Natural killer cell (primary cell): ENCODE measurements at regions of chr14 and their contacts with region 1.

Region 1: DNA sequence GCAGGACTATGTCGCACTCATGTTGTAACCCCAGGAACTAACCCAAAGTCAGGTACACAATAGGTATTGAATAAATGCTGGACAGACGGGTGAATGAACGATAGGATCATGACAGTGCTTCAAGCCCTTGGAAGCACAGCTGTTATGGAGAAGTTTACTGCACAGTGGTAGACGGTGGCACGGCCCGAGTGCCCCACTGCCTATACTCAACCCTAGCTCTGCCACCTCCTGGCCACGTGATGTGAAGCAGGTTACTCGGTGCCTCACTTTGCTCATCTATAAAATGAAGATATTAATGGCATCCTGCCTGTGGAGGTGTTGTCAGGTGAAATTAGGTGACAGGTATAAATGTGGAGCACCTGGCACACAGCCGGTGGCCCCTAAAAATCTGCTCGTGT is 5.8 kb downstream of the ASB2 start:
- DNase-seq: peak; percentile 64 to 86
- ATAC-seq: peak; percentile 90 to 94 (median 92)
- H3K4me3 ChIP-seq: peak overlapping the region; percentile 82
- H3K4me3 Mint-ChIP-seq: peak overlapping the region; percentile 92
- H3K27ac ChIP-seq: peak overlapping the region; percentile 49
- H3K27ac Mint-ChIP-seq: peak overlapping the region; percentile 76 to 92
- H3K4me1 ChIP-seq: peaks cover 57% of the 10 kb centered on the region
- H3K4me1 Mint-ChIP-seq: peaks cover 18 to 30% of the 10 kb centered on the region in 2 donors
- H3K27me3 ChIP-seq: peaks cover 3% of the 10 kb centered on the region
- H3K27me3 Mint-ChIP-seq: peaks cover 6 to 8% of the 10 kb centered on the region in 2 donors
- CTCF ChIP-seq: peak; percentile 73

Region 2: GRCh38 chr14:93939304-93940229 is 31.0 kb before region 1 on chr14:
- intact Hi-C with region 1: loop called (anchors 1 kb)
- DNase-seq: peak; percentile 92 to 97
- ATAC-seq: peak; percentile 97 to 99 (median 97)
- H3K4me3 ChIP-seq: peak overlapping the region; percentile 8
- H3K4me3 Mint-ChIP-seq: no peak overlapping the region
- H3K27ac ChIP-seq: no peak overlapping the region
- H3K27ac Mint-ChIP-seq: peak overlapping the region in 1 of 2 donors; percentile 42
- H3K4me1 ChIP-seq: peaks cover 13% of the 10 kb centered on the region
- H3K4me1 Mint-ChIP-seq: peaks cover 0 to 5% of the 10 kb centered on the region in 2 donors
- H3K27me3 ChIP-seq: no peaks in the 10 kb centered on the region
- H3K27me3 Mint-ChIP-seq: no peaks in the 10 kb centered on the region
- CTCF ChIP-seq: peak; percentile 99

Region 3: DNA sequence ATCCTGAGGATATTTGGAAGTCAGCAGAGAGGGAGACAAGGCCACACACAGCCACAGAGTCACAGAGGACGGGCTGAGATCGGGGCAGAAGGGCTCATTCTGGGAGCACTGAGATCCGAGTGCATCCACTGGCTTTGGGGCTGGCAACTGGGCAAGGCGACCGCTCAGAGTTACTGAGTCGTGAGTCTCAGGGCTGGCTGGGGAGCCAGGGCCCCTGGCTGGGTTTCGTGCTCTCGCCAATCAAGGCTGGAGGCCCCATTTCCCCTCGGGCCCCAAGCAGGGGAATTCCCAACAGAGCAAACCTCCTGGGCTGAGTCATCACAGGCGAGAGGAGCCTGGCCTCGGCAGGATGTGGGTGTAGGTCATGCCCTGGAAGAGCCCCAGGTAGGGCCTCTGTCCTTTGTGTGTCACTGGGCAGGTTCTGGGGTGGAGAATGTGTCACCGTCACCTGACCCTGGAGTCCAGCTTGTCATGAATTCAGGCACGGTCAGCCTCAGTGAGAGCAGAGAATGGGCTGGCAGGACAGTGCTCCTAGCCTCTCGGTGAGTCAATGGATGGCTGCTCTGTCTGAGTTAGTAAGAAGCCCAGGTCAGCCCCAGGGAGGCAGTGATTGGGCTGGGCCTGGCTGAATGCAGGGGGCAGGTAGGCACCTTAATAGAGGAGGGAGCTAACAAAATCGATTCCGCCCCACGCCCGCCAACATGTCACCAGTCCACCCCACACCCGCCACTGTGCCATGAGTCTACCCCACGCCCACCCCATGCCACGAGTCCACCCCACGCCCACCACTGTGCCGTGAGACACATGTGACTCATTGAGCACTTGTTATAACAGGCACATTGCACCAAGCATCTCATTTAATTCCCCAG is 11.1 kb before region 1 on chr14:
- intact Hi-C with region 1: loop called (anchors 2 kb)
- DNase-seq: peak; percentile 86 to 96
- ATAC-seq: peak; percentile 64 to 86 (median 80)
- H3K4me3 ChIP-seq: no peak overlapping the region
- H3K4me3 Mint-ChIP-seq: peak overlapping the region; percentile 81
- H3K27ac ChIP-seq: peak overlapping the region; percentile 81
- H3K27ac Mint-ChIP-seq: peak overlapping the region; percentile 95 to 97
- H3K4me1 ChIP-seq: peaks cover 98% of the 10 kb centered on the region
- H3K4me1 Mint-ChIP-seq: peaks cover 90 to 98% of the 10 kb centered on the region in 2 donors
- H3K27me3 ChIP-seq: no peaks in the 10 kb centered on the region
- H3K27me3 Mint-ChIP-seq: no peaks in the 10 kb centered on the region
- CTCF ChIP-seq: no peak